Caco-2 (cell line): ENCODE measurements at regions of chr14 and their contacts with region 1.

Region 1: GRCh38 chr14:88189417-88190191 is 133.5 kb downstream of the KCNK10 start:
- DNase-seq: peak; percentile 88 to 90
- H3K4me3 ChIP-seq: peak overlapping the region; percentile 6; the same call in 1 of the 2 replicates
- H3K4me3 Mint-ChIP-seq: peak overlapping the region; percentile 71
- H3K27ac Mint-ChIP-seq: peak overlapping the region; percentile 70
- H3K4me1 ChIP-seq: peaks cover 20% of the 10 kb centered on the region
- H3K4me1 Mint-ChIP-seq: peaks cover 18% of the 10 kb centered on the region
- H3K27me3 ChIP-seq: no peaks in the 10 kb centered on the region
- H3K27me3 Mint-ChIP-seq: no peaks in the 10 kb centered on the region
- CTCF ChIP-seq: peak; percentile 60 to 66

Region 2: DNA sequence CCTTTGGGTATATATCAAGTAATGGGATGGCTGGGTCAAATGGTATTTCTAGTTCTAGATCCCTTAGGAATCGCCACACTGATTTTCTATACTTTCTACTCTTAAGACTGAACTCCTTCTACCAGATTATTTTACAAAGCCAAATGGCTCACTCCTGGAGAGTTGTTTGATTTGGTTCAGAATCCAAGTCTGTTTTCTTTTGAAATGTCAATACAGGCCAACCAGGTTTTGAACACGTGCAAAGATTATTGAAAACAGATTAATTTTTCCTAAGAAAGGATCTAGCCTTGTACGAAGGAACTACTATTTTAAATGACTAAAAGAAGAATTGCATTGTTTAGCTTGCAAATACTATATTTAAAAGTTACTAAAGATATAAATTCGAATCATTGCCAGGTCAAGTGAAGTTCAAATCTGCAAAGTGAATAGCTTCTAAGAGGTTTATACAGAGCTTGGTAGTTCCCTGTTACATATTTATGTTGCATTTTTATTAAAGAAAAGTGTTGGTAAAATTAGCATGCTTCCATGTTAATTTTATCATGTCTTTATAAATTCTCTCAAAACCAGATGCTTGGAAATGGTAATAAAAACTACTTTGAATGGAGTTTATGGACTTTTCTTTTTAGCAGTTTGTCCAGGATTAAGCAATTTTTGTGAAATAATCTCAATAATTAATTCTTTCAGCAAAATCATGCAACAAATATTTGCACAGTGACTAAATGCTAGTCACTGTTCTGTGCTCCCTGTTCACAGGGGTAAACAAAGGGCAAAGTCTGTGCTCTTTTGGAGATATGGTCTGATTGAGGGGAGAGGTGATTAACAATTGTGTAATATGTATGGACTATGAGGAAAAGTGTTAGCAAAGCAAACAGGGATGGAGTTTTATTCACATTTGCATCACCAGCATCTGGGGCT is 145.8 kb before region 1 on chr14:
- CTCF ChIA-PET with region 1: no interaction called
- POLR2A ChIA-PET with region 1: no interaction called
- intact Hi-C with region 1: no loop called
- DNase-seq: peak in 1 of 2 experiments; percentile 44
- H3K4me3 ChIP-seq: no peak overlapping the region
- H3K4me3 Mint-ChIP-seq: no peak overlapping the region
- H3K27ac Mint-ChIP-seq: no peak overlapping the region
- H3K4me1 ChIP-seq: peaks cover 20% of the 10 kb centered on the region
- H3K4me1 Mint-ChIP-seq: peaks cover 12% of the 10 kb centered on the region
- H3K27me3 ChIP-seq: no peaks in the 10 kb centered on the region
- H3K27me3 Mint-ChIP-seq: no peaks in the 10 kb centered on the region
- CTCF ChIP-seq: no peak

Region 3: DNA sequence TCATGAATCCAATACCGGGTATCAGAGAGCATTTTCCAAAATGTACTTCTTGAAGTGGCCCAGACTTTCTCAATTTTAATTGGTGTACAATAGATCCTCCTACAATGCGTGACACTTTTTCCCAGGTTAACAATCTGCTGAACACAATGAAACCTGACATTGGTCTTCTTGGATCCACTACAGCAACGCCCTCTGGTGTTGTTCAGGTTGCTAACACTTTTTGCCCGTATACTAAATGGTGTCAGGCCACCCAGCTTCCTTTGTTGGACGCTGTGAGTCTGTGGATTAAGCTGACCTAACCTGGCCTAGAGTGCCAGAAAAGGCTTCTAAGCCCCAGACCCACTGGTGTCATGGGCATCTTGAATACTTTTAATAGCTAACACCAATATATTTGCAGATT is 44.3 kb after region 1 on chr14:
- CTCF ChIA-PET with region 1: interaction called, 14 read pairs
- POLR2A ChIA-PET with region 1: no interaction called
- intact Hi-C with region 1: loop called (anchors 1 kb)
- DNase-seq: peak; percentile 36 to 39
- H3K4me3 ChIP-seq: no peak overlapping the region
- H3K4me3 Mint-ChIP-seq: no peak overlapping the region
- H3K27ac Mint-ChIP-seq: no peak overlapping the region
- H3K4me1 ChIP-seq: no peaks in the 10 kb centered on the region
- H3K4me1 Mint-ChIP-seq: no peaks in the 10 kb centered on the region
- H3K27me3 ChIP-seq: no peaks in the 10 kb centered on the region
- H3K27me3 Mint-ChIP-seq: no peaks in the 10 kb centered on the region
- CTCF ChIP-seq: peak; percentile 25 to 33

Region 4: GRCh38 chr14:88380405-88380804 is 190.8 kb after region 1 on chr14:
- CTCF ChIA-PET with region 1: interaction called, 124 read pairs
- POLR2A ChIA-PET with region 1: no interaction called
- intact Hi-C with region 1: loop called (anchors 1 kb)
- DNase-seq: peak in 1 of 2 experiments; percentile 29
- H3K4me3 ChIP-seq: no peak overlapping the region
- H3K4me3 Mint-ChIP-seq: no peak overlapping the region
- H3K27ac Mint-ChIP-seq: no peak overlapping the region
- H3K4me1 ChIP-seq: no peaks in the 10 kb centered on the region
- H3K4me1 Mint-ChIP-seq: no peaks in the 10 kb centered on the region
- H3K27me3 ChIP-seq: no peaks in the 10 kb centered on the region
- H3K27me3 Mint-ChIP-seq: peaks cover 3% of the 10 kb centered on the region
- CTCF ChIP-seq: peak; percentile 38 to 47

Region 5: DNA sequence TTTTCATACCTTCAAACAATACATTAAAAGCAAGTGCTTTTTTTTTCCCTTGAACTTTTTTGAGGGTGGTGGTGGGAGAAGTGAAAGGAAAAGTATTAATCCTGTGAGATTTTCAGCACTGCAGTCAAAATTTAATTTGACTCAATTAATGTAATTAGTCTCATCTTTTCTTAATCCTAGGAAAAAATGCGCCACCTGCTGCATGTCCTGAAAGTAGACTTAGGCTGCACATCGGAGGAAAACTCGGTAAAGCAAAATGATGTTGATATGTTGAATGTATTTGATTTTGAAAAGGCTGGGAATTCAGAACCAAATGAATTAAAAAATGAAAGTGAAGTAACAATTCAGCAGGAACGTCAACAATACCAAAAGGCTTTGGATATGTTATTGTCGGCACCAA is 248.1 kb after region 1 on chr14:
- CTCF ChIA-PET with region 1: interaction called, 6 read pairs
- POLR2A ChIA-PET with region 1: no interaction called
- intact Hi-C with region 1: loop called (anchors 2 kb)
- DNase-seq: no peak
- H3K4me3 ChIP-seq: no peak overlapping the region
- H3K4me3 Mint-ChIP-seq: no peak overlapping the region
- H3K27ac Mint-ChIP-seq: no peak overlapping the region
- H3K4me1 ChIP-seq: no peaks in the 10 kb centered on the region
- H3K4me1 Mint-ChIP-seq: no peaks in the 10 kb centered on the region
- H3K27me3 ChIP-seq: no peaks in the 10 kb centered on the region
- H3K27me3 Mint-ChIP-seq: no peaks in the 10 kb centered on the region
- CTCF ChIP-seq: no peak

Region 6: DNA sequence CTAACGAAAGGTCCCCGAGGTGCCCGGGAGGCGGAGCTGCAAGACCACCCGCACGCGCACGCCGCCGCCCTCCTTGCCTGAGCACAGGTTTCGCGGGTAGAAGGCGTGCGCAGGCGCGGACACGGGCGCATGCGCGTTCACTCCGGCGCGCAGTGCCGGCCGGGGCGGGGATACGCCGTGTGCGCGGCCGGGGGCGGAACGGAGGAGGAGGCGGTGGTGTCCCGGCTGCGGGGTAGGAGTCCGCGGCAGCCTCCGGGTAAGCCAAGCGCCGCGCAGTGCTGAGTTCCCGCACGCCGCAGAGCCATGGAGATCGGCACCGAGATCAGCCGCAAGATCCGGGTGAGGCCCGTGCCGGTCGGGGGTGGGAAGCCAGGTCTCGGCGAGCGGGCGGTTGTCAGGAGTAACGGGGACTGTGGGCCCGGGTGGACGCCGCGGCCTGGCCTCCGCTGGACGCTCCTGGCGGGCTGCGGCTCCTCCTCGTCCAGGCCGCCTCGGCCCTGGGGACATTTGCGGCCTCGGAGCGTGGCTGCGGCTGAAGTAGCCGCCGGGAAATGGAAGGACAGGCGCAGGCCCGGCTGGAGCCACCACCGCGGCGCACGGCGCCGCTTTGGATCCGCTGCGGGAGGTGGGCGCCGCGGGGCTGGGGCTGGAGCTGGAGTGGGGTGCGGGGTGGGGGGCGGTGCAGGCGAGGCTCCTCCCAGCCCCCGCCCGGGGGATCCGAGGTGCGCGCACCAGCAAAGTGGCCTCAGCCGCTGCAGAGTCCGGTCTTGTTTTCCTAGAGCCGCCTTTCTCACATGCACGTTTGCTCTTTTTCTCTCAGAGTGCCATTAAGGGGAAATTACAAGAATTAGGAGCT is 373.5 kb after region 1 on chr14 and contains the start of gene ZC3H14:
- CTCF ChIA-PET with region 1: interaction called, 11 read pairs
- POLR2A ChIA-PET with region 1: no interaction called
- intact Hi-C with region 1: loop called (anchors 1 kb)
- DNase-seq: peak; percentile 87 to 93
- H3K4me3 ChIP-seq: peak within 1 kb of the TSS; percentile 99
- H3K4me3 Mint-ChIP-seq: peak within 1 kb of the TSS; percentile 73
- H3K27ac Mint-ChIP-seq: peak within 1 kb of the TSS; percentile 44
- H3K4me1 ChIP-seq: peaks cover 18% of the 10 kb centered on the region; the same call in 1 of the 2 replicates
- H3K4me1 Mint-ChIP-seq: peaks cover 7% of the 10 kb centered on the region
- H3K27me3 ChIP-seq: no peaks in the 10 kb centered on the region
- H3K27me3 Mint-ChIP-seq: no peaks in the 10 kb centered on the region
- CTCF ChIP-seq: no peak
- total RNA-seq, gene ZC3H14: 77.1 and 77.6 TPM in 2 replicates